Panc1 (cell line): ENCODE measurements at regions of chr20 and their contacts with region 1.

Region 1: GRCh38 chr20:51462566-51463276 is 79.8 kb downstream of the NFATC2 start:
- DNase-seq: no peak
- ATAC-seq: no peak
- H3K4me3 ChIP-seq: no peak overlapping the region
- H3K27ac ChIP-seq: peak overlapping the region; percentile 70; the same call in 1 of the 2 replicates
- H3K4me1 ChIP-seq: peaks cover 38% of the 10 kb centered on the region
- H3K27me3 ChIP-seq: no peaks in the 10 kb centered on the region
- CTCF ChIP-seq: no peak

Region 2: GRCh38 chr20:51480507-51481270 is 18.0 kb after region 1 on chr20:
- CTCF ChIA-PET with region 1: no interaction called
- POLR2A ChIA-PET with region 1: interaction called, 12 read pairs
- in situ Hi-C with region 1: no loop called
- intact Hi-C with region 1: no loop called
- DNase-seq: no peak
- ATAC-seq: no peak
- H3K4me3 ChIP-seq: no peak overlapping the region
- H3K27ac ChIP-seq: no peak overlapping the region
- H3K4me1 ChIP-seq: no peaks in the 10 kb centered on the region
- H3K27me3 ChIP-seq: no peaks in the 10 kb centered on the region
- CTCF ChIP-seq: no peak

Region 3: DNA sequence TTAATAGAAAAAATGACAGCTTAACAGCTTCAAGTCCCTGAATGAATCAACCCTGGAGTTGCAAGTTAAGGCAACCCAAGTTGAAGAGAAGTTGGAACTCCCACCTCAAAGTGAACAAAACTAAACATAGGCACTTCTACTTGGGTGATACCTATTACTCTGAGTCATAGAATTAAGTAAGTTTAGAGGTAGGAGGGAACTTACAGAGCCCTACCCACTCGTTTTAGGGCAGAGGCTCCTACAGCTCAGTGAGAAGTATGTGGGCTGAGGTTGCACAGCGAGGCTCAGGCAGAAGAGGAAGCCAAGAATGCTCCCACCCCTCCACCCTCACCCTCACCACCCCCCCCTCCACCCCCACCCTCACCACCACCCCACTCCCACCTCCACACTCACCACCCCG is 37.6 kb after region 1 on chr20:
- CTCF ChIA-PET with region 1: no interaction called
- POLR2A ChIA-PET with region 1: no interaction called
- in situ Hi-C with region 1: no loop called
- intact Hi-C with region 1: no loop called
- DNase-seq: no peak
- ATAC-seq: no peak
- H3K4me3 ChIP-seq: no peak overlapping the region
- H3K27ac ChIP-seq: peak overlapping the region; percentile 26; the same call in 1 of the 2 replicates
- H3K4me1 ChIP-seq: peaks cover 19% of the 10 kb centered on the region
- H3K27me3 ChIP-seq: no peaks in the 10 kb centered on the region
- CTCF ChIP-seq: no peak